Body of pancreas (tissue), 4 donors: ENCODE measurements at regions of chr9 and their contacts with region 1.

Region 1: DNA sequence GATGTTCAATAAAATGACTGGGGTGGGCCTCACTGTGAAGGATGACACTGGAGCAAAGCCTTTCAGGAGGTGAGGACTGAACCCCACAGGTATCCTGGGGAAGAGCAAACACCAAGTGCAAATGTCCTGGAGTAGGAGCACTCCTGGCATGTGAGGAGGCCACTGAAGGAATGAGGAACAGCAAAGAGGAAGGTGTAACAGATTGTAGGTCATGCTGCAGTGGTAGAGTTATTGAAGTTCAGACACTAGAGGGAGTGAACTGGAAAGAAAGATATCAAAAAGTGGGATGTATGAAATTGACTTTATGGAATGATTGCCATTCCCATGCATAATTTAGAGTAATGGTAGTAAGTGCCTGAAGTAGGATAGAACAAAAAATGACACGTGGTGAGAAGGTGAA is 21.8 kb downstream of the KCNV2 start:
- DNase-seq: no peak
- ATAC-seq: no peak
- H3K4me3 ChIP-seq: no peak overlapping the region
- H3K27ac ChIP-seq: no peak overlapping the region
- H3K4me1 ChIP-seq: peaks cover 41% of the 10 kb centered on the region
- H3K27me3 ChIP-seq: no peaks in the 10 kb centered on the region
- CTCF ChIP-seq: peak in 3 of 7 experiments; percentile 16 to 20 (median 19)
- POLR2A ChIP-seq: no peak

Region 2: DNA sequence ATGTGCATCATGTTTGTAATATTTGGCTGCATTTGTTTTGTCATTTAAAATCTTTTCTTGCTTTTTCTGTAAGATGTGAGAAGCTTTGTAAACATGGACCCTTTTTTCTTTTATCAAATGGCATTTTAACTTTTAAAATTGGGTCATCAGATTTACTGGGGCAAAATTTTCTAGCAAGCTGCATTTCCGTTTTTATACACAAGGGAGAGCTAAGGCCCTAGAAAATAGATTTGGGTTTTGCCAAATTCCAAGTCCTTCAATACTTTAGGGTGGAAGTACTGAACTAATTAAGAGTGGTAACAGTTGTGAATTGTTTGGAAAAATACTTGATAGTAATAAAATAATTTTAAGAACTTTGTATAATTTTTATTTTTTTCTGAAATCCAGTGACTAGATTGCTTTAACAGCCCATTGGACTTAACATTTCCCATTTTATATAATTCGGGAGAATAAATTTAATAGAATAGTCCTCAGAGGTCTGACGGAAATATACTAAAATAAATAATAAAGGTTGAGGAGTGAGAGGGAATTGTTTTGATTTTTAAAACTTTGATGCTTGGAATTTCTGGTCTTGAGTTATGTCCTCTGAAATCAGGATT is 606.5 kb before region 1 on chr9:
- intact Hi-C with region 1: loop called (anchors 10 kb)
- DNase-seq: no peak
- ATAC-seq: peak; percentile 53
- H3K4me3 ChIP-seq: no peak overlapping the region
- H3K27ac ChIP-seq: no peak overlapping the region
- H3K4me1 ChIP-seq: peaks cover 1% of the 10 kb centered on the region
- H3K27me3 ChIP-seq: no peaks in the 10 kb centered on the region
- CTCF ChIP-seq: peak; percentile 20 to 83 (median 75)
- POLR2A ChIP-seq: no peak